PC-3 (cell line): ENCODE measurements at regions of chrX and their contacts with region 1.

Region 1: DNA sequence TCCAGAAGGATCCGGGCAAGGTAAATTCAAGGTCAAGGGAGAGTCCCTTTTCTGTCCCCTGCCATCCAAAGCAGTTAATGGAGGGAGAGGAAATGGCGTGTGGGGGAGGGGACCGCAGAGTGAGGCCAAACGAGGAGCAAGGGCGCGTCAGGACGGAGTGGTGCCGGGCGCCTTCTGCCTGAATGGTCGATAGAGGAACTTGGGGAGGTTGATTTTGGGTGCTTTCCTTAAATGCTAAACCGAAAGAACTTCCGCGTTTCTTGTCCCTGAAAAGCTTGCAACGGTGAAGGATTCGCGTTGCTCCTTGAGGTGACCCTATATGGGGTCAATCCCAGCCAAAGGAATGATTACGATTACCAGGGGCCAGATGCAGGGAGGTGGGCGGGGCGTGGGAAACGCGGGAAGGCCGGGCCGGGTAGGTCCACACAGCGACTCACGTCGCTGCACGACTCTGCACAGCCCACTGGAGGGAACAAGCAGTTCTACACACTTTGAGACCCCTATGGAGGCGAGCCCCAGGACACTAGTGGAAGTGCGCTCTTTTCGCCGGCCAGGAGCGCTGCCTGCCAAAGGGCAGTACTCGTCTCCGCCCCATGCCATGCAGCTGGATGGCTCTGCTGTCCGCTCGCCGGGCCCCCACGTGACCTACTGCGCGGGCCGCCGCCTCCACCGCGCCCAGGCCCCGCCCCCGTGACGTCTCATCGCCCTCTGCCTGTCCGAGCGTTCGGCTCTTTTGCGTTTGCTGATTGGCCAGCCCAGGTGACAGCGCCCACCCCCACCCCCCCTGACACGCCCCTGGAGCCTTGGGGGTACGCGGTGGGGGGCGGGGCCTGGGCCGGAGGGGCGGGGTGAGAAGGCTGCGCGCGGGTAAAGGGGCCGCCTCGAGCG is 452 bp upstream of the GK start:
- DNase-seq: peak; percentile 87
- ATAC-seq: peak; percentile 81
- H3K4me3 ChIP-seq: peak overlapping the region; percentile 87
- H3K27ac ChIP-seq: no peak overlapping the region
- H3K4me1 ChIP-seq: peaks cover 54% of the 10 kb centered on the region
- H3K27me3 ChIP-seq: no peaks in the 10 kb centered on the region
- CTCF ChIP-seq: no peak

Region 2: DNA sequence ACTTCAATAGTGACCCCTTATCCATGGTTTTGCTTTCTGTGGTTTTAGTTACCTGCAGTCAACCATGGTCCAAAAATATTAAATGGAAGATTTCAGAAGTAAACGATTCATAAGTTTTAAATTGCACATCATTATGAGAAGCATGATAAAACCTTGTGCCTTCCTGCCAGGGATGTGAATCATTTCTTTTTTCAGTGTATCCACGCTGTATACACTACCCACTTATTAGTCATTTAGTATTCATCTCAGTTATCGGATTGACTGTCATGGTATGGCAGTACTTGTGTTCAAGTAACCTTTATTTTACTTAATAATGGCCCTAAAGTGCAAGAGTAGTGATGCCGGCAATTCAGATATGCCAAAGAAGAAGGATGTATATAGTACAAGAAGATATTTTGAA is 37.5 kb before region 1 on chrX:
- CTCF ChIA-PET with region 1: no interaction called
- POLR2A ChIA-PET with region 1: no interaction called
- intact Hi-C with region 1: no loop called
- DNase-seq: peak; percentile 80
- ATAC-seq: peak; percentile 99
- H3K4me3 ChIP-seq: no peak overlapping the region
- H3K27ac ChIP-seq: peak overlapping the region; percentile 52
- H3K4me1 ChIP-seq: peaks cover 16% of the 10 kb centered on the region
- H3K27me3 ChIP-seq: no peaks in the 10 kb centered on the region
- CTCF ChIP-seq: no peak

Region 3: GRCh38 chrX:30791296-30792278 is 138.8 kb after region 1 on chrX:
- CTCF ChIA-PET with region 1: no interaction called
- POLR2A ChIA-PET with region 1: no interaction called
- intact Hi-C with region 1: no loop called
- DNase-seq: no peak
- ATAC-seq: no peak
- H3K4me3 ChIP-seq: no peak overlapping the region
- H3K27ac ChIP-seq: no peak overlapping the region
- H3K4me1 ChIP-seq: no peaks in the 10 kb centered on the region
- H3K27me3 ChIP-seq: no peaks in the 10 kb centered on the region
- CTCF ChIP-seq: no peak

Region 4: GRCh38 chrX:30889147-30890140 is 236.7 kb after region 1 on chrX and contains the start of gene TAB3:
- CTCF ChIA-PET with region 1: no interaction called
- POLR2A ChIA-PET with region 1: no interaction called
- intact Hi-C with region 1: loop called (anchors 10 kb)
- DNase-seq: peak; percentile 97
- ATAC-seq: peak; percentile 82
- H3K4me3 ChIP-seq: peak within 1 kb of the TSS; percentile 89
- H3K27ac ChIP-seq: peak within 1 kb of the TSS; percentile 27
- H3K4me1 ChIP-seq: peaks cover 39% of the 10 kb centered on the region
- H3K27me3 ChIP-seq: no peaks in the 10 kb centered on the region
- CTCF ChIP-seq: no peak
- total RNA-seq, gene TAB3: 14.7 and 18.6 TPM in 2 replicates